ENCODE measurements at regions of chr9 and their contacts with region 1.

Region 1: DNA sequence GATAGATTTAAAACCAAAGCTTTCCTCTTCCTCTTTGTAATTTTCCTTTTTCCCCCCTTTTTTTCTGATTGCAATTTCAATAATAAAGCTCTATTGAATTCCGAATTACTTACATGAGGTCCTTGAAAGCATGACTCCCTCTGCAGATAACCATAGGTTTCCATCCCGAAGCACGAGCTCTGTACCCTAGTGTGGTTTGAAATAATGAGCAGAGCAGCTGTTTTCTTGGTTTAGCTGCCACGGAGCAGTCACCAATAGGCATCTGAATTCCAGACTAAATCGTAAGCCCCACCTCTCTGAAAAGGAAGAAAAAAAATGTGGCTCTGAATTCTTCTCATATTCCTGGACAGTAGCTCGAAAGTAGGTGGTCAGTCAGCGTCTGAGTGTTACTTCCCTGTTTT is 18.5 kb upstream of the GNE start:
- DNase-seq: peak; percentile 45
- H3K4me3 ChIP-seq: peak overlapping the region; percentile 47
- H3K27ac ChIP-seq: no peak overlapping the region
- H3K27me3 ChIP-seq: no peaks in the 10 kb centered on the region
- CTCF ChIP-seq: no peak

Region 2: DNA sequence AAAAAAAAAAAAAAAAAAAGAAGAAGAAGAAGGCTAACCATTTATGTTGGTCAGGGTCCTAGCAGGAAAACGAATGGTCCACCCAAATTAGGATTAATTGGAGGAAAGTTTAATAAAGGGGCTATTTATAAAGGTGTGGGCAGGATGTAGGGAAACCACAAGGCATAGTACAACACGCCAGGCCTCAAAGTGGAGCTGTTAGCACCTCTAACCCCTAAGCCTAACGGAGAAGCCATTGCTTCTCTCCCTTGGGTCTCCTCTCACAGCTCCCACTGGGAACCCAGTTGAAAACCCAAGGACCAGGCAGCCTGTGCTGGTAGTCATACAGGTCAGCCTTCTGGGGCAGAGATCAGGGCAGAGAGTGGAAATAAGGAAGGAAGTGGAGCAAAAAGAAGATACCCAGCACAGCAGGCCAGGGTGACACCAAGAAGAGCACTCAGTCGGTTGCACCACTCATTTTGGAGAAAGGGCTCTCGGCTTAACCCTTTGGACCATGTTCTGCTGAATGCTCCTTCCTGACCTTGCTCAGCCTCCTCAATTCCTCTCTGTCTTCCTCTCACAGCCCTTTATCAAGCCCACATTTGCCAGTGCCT is 149.0 kb before region 1 on chr9:
- CTCF ChIA-PET with region 1: no interaction called
- POLR2A ChIA-PET with region 1: no interaction called
- DNase-seq: no peak
- H3K4me3 ChIP-seq: no peak overlapping the region
- H3K27ac ChIP-seq: no peak overlapping the region
- H3K27me3 ChIP-seq: no peaks in the 10 kb centered on the region
- CTCF ChIP-seq: no peak

Region 3: GRCh38 chr9:36258208-36258988 is 18.4 kb before region 1 on chr9 and contains the start of gene GNE:
- CTCF ChIA-PET with region 1: no interaction called
- POLR2A ChIA-PET with region 1: interaction called, 14 read pairs
- DNase-seq: peak; percentile 85
- H3K4me3 ChIP-seq: peak within 1 kb of the TSS; percentile 82
- H3K27ac ChIP-seq: peak within 1 kb of the TSS; percentile 88
- H3K27me3 ChIP-seq: no peaks in the 10 kb centered on the region
- CTCF ChIP-seq: no peak
- polyA plus RNA-seq, gene GNE: 16.4 and 17.4 TPM in 2 replicates

Measured in AG04450 (cell line).